PC-3 (cell line): ENCODE measurements at regions of chr4 and their contacts with region 1.

Region 1: DNA sequence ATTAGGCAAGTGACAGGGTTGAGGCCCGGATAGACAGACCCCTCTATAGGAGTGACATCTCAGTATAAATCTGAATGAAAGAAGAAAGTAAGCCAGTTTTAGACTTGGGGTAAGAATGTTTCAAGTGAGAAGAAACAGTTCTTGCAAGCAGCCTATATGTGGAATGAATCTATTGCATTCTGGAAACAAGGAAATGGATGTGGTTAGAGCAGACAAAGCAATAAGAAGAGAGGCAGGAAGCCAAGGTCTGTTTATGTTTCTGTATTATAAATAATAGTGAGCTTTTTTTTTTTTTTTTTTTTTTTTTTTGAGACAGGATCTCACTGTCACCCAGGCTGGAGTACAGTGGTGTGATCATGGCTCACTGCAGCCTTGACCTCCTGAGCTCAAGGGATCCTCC is 255.8 kb downstream of the UNC5C start:
- DNase-seq: no peak
- ATAC-seq: no peak
- H3K4me3 ChIP-seq: no peak overlapping the region
- H3K27ac ChIP-seq: no peak overlapping the region
- H3K4me1 ChIP-seq: peaks cover 38% of the 10 kb centered on the region
- H3K27me3 ChIP-seq: no peaks in the 10 kb centered on the region
- CTCF ChIP-seq: no peak

Region 2: DNA sequence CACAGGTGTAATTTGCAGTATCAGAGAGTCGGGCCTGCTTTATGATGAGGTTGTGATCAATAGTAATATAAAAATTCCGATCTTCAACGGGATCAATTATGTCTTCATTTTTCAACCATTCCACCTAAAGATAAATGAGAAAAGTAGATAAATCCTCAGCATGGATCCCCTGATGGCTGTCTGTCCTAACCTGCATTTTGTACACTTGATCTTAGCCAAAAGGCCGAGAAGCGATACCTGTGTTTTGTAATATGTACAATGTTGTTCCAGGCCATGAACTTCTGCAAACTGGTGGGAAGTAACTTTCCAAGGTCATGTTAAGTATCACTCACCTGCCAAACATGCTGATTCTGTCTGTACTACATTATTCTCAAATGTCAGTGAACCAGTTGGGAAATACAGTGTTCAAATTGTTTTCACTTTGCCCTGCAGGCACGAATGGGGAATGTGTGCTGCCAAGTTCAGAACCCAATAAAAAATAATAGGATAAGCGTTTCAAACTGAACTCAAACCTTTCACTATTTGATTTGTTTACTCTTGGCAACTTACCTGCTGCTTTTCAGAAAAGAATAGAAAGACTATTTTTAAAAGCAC is 42.4 kb before region 1 on chr4:
- CTCF ChIA-PET with region 1: no interaction called
- POLR2A ChIA-PET with region 1: no interaction called
- intact Hi-C with region 1: loop called (anchors 5 kb)
- DNase-seq: peak; percentile 92
- ATAC-seq: peak; percentile 79
- H3K4me3 ChIP-seq: no peak overlapping the region
- H3K27ac ChIP-seq: peak overlapping the region; percentile 57
- H3K4me1 ChIP-seq: peaks cover 37% of the 10 kb centered on the region
- H3K27me3 ChIP-seq: no peaks in the 10 kb centered on the region
- CTCF ChIP-seq: no peak

Region 3: GRCh38 chr4:95317085-95317793 is 24.2 kb after region 1 on chr4:
- CTCF ChIA-PET with region 1: no interaction called
- POLR2A ChIA-PET with region 1: no interaction called
- intact Hi-C with region 1: no loop called
- DNase-seq: no peak
- ATAC-seq: no peak
- H3K4me3 ChIP-seq: no peak overlapping the region
- H3K27ac ChIP-seq: no peak overlapping the region
- H3K4me1 ChIP-seq: no peaks in the 10 kb centered on the region; the same call in 1 of the 2 replicates
- H3K27me3 ChIP-seq: no peaks in the 10 kb centered on the region
- CTCF ChIP-seq: no peak

Region 4: DNA sequence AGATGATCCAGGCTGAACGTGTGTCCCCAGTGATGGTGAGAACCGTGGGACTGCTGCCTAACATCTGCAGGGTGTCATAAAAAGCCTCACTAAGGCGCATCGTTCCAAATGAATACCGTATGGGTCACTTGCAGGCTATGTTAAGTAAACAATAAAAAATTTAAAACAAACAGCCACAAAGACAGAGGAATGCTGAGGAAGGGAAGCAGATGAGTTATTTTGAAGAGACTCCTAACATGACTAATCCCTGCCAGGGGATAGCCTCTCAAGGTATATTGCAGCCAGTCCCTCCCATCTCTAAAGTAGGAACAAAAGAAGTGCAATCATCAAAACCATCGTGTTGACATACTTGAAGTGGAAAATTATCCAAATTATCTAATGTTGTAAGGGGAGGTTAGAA is 172.0 kb after region 1 on chr4:
- CTCF ChIA-PET with region 1: no interaction called
- POLR2A ChIA-PET with region 1: no interaction called
- intact Hi-C with region 1: loop called (anchors 5 kb)
- DNase-seq: peak; percentile 79
- ATAC-seq: peak; percentile 99
- H3K4me3 ChIP-seq: no peak overlapping the region
- H3K27ac ChIP-seq: no peak overlapping the region
- H3K4me1 ChIP-seq: peaks cover 18% of the 10 kb centered on the region
- H3K27me3 ChIP-seq: no peaks in the 10 kb centered on the region
- CTCF ChIP-seq: no peak